ENCODE measurements at regions of chr20 and their contacts with region 1.

Region 1: GRCh38 chr20:5448449-5449118 is 131.8 kb upstream of the PROKR2 start:
- DNase-seq: peak; percentile 2
- H3K4me3 ChIP-seq: no peak overlapping the region
- H3K27ac ChIP-seq: no peak overlapping the region
- H3K27me3 ChIP-seq: no peaks in the 10 kb centered on the region
- CTCF ChIP-seq: peak; percentile 77

Region 2: GRCh38 chr20:5205348-5206210 is 243.0 kb before region 1 on chr20:
- CTCF ChIA-PET with region 1: interaction called, 133 read pairs
- POLR2A ChIA-PET with region 1: no interaction called
- DNase-seq: peak; percentile 47
- H3K4me3 ChIP-seq: no peak overlapping the region
- H3K27ac ChIP-seq: no peak overlapping the region
- H3K27me3 ChIP-seq: no peaks in the 10 kb centered on the region
- CTCF ChIP-seq: peak; percentile 97

Region 3: DNA sequence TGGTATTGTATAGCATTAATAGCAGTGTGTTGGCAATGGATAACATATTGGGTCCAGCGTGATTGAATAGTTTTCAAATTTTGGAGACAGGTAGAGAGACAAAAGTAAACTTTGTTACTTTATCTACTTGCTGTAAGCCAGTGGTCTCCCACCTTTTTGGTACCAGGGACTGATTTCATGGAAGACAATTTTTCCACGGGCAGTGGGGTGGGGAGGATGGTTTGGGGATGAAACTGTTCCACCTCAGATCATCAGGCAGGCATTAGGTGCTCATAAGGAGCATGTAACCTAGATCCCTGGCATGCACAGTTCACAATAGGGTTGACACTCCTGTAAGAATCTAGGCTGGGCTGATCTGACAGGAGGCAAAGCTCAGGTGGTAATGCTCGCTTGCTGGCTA is 117.2 kb before region 1 on chr20:
- CTCF ChIA-PET with region 1: no interaction called
- POLR2A ChIA-PET with region 1: no interaction called
- DNase-seq: no peak
- H3K4me3 ChIP-seq: no peak overlapping the region
- H3K27ac ChIP-seq: no peak overlapping the region
- H3K27me3 ChIP-seq: no peaks in the 10 kb centered on the region
- CTCF ChIP-seq: no peak

Region 4: GRCh38 chr20:5430670-5431069 is 17.9 kb before region 1 on chr20:
- CTCF ChIA-PET with region 1: interaction called, 14 read pairs
- POLR2A ChIA-PET with region 1: no interaction called
- DNase-seq: no peak
- H3K4me3 ChIP-seq: no peak overlapping the region
- H3K27ac ChIP-seq: no peak overlapping the region
- H3K27me3 ChIP-seq: peaks cover 4% of the 10 kb centered on the region
- CTCF ChIP-seq: no peak

Region 5: DNA sequence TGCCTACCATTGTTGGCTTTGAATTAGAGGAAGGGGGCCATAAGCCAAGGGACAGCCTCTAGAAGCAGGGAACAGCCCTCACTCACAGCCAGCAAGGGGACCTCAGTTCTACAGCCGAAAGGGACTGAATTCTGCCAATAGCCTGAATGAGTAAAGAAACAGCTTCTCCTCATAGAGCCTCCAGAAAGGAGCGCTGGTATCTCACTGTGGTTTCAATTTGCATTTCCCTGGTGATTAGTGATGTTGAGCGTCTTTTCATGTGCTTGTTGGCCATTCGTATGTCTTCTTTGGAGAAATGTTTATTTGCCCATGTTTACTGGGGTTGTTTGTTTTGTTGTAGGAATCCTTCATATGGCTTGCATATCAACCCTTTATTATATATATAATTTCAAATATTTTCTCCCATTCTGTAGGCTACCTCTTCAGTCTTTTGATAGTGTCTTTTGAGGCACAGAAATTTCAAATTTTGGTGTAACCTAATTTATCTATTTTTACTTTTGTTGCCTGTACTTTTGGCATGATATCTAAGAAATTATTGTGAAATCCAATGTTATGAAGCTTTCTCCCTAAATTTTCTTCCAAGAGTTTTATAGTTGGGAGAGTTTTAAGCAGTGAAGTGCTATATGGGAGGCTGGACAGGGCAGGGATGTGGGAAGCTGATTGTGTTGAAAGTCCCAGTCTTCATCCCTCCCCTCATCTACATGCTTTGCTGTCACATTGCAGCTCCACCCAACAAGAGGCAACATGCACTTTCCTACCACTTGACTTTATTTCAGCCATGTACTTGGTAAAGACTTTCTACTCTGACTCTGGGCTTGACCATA is 219.3 kb after region 1 on chr20:
- CTCF ChIA-PET with region 1: no interaction called
- POLR2A ChIA-PET with region 1: no interaction called
- DNase-seq: no peak
- H3K4me3 ChIP-seq: no peak overlapping the region
- H3K27ac ChIP-seq: no peak overlapping the region
- H3K27me3 ChIP-seq: peaks cover 8% of the 10 kb centered on the region
- CTCF ChIP-seq: no peak